ENCODE measurements at regions of chr7 and their contacts with region 1.

Region 1: GRCh38 chr7:97027427-97028234 is 3.0 kb upstream of the DLX5 start:
- DNase-seq: peak; percentile 34 to 69 (median 59)
- ATAC-seq: peak; percentile 89
- H3K4me3 ChIP-seq: peak overlapping the region; percentile 46
- H3K4me3 Mint-ChIP-seq: peak overlapping the region; percentile 71 to 92 (median 87)
- H3K27ac ChIP-seq: no peak overlapping the region
- H3K27ac Mint-ChIP-seq: peak overlapping the region in 1 of 9 donors; percentile 23
- H3K4me1 ChIP-seq: peaks cover 0 to 18% of the 10 kb centered on the region in 2 donors
- H3K4me1 Mint-ChIP-seq: peaks cover 19 to 51% (median 43%) of the 10 kb centered on the region in 7 donors
- H3K27me3 ChIP-seq: peaks cover 0 to 31% of the 10 kb centered on the region in 2 donors
- H3K27me3 Mint-ChIP-seq: peaks cover 62 to 81% (median 78%) of the 10 kb centered on the region in 5 donors

Region 2: DNA sequence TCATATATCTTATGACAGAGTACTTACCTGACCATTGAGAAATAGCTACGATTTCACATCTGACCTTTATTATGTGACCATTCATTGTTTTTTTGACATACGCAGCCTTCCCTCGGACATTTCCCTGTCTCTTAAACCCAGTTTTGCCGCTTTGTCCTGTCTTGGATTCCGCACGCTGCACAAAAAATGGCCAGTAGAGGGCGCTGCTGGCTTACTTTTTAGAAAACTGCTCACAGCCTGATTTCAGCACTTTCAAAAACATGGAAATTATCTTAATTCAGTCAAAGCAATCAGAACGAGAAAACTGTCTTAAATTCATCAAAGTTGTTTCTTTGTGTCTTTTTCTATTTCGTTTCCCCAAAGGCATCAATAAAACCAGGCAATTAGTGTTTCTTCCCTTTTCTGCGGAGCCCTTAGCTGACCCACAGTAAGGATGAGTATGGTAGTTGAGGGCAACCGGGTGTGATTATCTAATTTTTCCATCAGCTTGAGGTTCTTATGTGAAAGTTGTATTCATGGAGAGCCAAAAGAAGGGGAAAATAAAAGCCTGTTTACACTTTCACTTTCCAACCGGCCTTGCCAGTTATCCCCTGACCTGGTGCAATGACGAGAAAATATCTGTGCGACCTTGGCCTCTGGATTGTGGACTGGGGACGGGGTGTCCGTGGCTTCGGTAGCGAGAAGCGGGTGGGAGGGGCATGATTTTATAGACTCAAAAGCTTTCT is 1110.9 kb before region 1 on chr7:
- CTCF ChIA-PET with region 1: interaction called, 11 read pairs
- POLR2A ChIA-PET with region 1: no interaction called
- intact Hi-C with region 1: loop called in 1 of 2 experiments (anchors 1 kb)
- DNase-seq: peak; percentile 26 to 66 (median 49)
- ATAC-seq: peak; percentile 72
- H3K4me3 ChIP-seq: no peak overlapping the region
- H3K4me3 Mint-ChIP-seq: peak overlapping the region in 1 of 10 donors; percentile 51
- H3K27ac ChIP-seq: no peak overlapping the region
- H3K27ac Mint-ChIP-seq: no peak overlapping the region
- H3K4me1 ChIP-seq: no peaks in the 10 kb centered on the region
- H3K4me1 Mint-ChIP-seq: peaks cover 0 to 8% (median 0%) of the 10 kb centered on the region in 7 donors
- H3K27me3 ChIP-seq: no peaks in the 10 kb centered on the region
- H3K27me3 Mint-ChIP-seq: peaks cover 19 to 41% (median 34%) of the 10 kb centered on the region in 5 donors

Region 3: DNA sequence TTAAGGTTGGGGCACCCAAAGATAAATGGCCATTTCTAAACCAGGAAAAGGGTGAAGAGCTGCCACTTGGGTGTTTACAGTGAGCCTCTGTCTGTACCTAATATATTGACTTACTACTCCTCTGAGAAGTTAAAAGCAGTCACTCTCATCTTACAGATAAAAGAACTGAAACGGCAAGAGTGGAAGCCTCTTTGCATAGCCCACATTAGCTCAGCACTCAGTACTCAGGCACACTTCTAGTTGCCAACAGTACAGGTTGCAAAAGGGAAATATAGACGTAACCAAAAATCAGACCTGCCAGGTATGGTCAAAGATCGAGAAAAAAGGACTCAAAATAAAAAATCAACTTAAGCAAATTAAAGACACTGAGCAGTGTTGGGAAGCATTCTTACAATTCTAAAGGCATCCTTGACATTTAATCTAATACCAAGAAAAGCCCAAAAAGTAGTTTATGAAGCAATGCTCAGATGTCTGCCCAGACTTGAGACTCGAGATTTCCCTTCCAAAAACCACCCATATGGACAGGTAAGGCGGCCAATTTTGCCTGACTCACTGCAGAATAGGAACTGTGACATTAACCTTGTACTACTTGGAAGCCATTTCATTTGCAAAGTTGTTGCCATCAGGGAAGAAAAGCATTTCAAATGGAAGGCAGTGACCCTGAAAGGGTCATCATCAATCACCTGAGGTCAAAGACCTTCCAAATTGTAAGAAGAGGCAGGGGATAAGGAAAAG is 845.0 kb before region 1 on chr7:
- CTCF ChIA-PET with region 1: no interaction called
- POLR2A ChIA-PET with region 1: no interaction called
- intact Hi-C with region 1: loop called in 1 of 2 experiments (anchors 1 kb)
- DNase-seq: no peak
- ATAC-seq: no peak
- H3K4me3 ChIP-seq: no peak overlapping the region
- H3K4me3 Mint-ChIP-seq: no peak overlapping the region
- H3K27ac ChIP-seq: no peak overlapping the region
- H3K27ac Mint-ChIP-seq: peak overlapping the region in 1 of 9 donors; percentile 1
- H3K4me1 ChIP-seq: no peaks in the 10 kb centered on the region
- H3K4me1 Mint-ChIP-seq: peaks cover 0 to 2% (median under 1%) of the 10 kb centered on the region in 7 donors
- H3K27me3 ChIP-seq: no peaks in the 10 kb centered on the region
- H3K27me3 Mint-ChIP-seq: no peaks in the 10 kb centered on the region

Region 4: GRCh38 chr7:96596120-96596826 is 431.4 kb before region 1 on chr7:
- CTCF ChIA-PET with region 1: no interaction called
- POLR2A ChIA-PET with region 1: no interaction called
- intact Hi-C with region 1: loop called in 1 of 2 experiments (anchors 5 kb)
- DNase-seq: peak in 2 of 9 donors; percentile 0 to 3
- ATAC-seq: no peak
- H3K4me3 ChIP-seq: no peak overlapping the region
- H3K4me3 Mint-ChIP-seq: no peak overlapping the region
- H3K27ac ChIP-seq: no peak overlapping the region
- H3K27ac Mint-ChIP-seq: no peak overlapping the region
- H3K4me1 ChIP-seq: no peaks in the 10 kb centered on the region
- H3K4me1 Mint-ChIP-seq: no peaks in the 10 kb centered on the region
- H3K27me3 ChIP-seq: no peaks in the 10 kb centered on the region
- H3K27me3 Mint-ChIP-seq: peaks cover 24 to 35% (median 30%) of the 10 kb centered on the region in 5 donors

Region 5: GRCh38 chr7:96995406-96996104 is 32.1 kb before region 1 on chr7:
- CTCF ChIA-PET with region 1: no interaction called
- POLR2A ChIA-PET with region 1: no interaction called
- intact Hi-C with region 1: loop called in 1 of 2 experiments (anchors 2 kb)
- DNase-seq: no peak
- ATAC-seq: no peak
- H3K4me3 ChIP-seq: no peak overlapping the region
- H3K4me3 Mint-ChIP-seq: no peak overlapping the region
- H3K27ac ChIP-seq: no peak overlapping the region
- H3K27ac Mint-ChIP-seq: no peak overlapping the region
- H3K4me1 ChIP-seq: no peaks in the 10 kb centered on the region
- H3K4me1 Mint-ChIP-seq: peaks cover 0 to 19% (median 5%) of the 10 kb centered on the region in 7 donors
- H3K27me3 ChIP-seq: peaks cover 3 to 40% of the 10 kb centered on the region in 2 donors
- H3K27me3 Mint-ChIP-seq: peaks cover 94 to 95% (median 95%) of the 10 kb centered on the region in 5 donors

Region 6: DNA sequence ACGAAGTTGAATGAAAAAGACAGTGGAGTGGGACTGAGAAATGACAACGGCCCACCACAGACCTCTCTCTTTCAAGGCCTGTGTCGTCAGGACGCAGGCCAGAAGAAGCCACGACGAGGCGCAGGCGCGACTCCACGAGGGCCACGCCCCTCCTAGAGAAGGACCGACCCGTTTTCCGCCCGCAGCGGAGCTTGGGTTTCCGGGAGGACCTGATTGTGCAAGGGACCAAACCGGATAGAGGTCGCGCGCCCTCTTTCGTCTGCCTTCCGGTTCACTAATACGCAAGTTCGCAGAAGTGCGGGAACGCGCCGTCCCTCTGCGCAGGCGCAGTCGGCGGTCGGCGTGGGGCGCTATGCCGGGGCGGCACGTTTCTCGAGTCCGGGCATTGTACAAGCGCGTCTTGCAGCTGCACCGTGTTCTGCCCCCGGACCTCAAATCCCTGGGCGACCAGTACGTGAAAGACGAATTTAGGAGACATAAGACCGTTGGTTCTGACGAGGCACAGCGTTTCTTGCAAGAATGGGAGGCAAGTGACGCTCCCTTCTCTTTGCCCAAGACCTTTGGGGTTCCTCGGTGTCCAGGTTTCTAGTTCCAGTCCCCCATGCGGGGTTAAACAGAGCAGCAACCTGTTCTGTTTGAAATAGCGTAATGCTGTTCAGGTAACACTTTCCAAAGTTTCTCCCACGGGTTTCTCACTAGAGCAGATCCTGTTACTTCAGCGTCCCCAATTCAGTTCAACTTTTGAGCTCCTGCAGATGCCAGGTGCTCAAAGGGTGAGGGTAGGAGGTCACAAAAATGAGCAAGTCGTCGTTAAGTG is 89.9 kb after region 1 on chr7 and contains the start of gene SDHAF3:
- CTCF ChIA-PET with region 1: no interaction called
- POLR2A ChIA-PET with region 1: no interaction called
- intact Hi-C with region 1: loop called in 1 of 2 experiments (anchors 1 kb)
- DNase-seq: peak; percentile 97 to 98 (median 98)
- ATAC-seq: peak; percentile 98
- H3K4me3 ChIP-seq: peak within 1 kb of the TSS; percentile 90
- H3K4me3 Mint-ChIP-seq: peak within 1 kb of the TSS; percentile 87 to 98 (median 96)
- H3K27ac ChIP-seq: peak within 1 kb of the TSS; percentile 71
- H3K27ac Mint-ChIP-seq: peak within 1 kb of the TSS; percentile 87 to 97 (median 94)
- H3K4me1 ChIP-seq: peaks cover 7 to 15% of the 10 kb centered on the region in 2 donors
- H3K4me1 Mint-ChIP-seq: peaks cover 17 to 67% (median 57%) of the 10 kb centered on the region in 7 donors
- H3K27me3 ChIP-seq: no peaks in the 10 kb centered on the region
- H3K27me3 Mint-ChIP-seq: peaks cover 0 to 2% (median 0%) of the 10 kb centered on the region in 5 donors
- total RNA-seq, gene SDHAF3: 8.4 to 16.5 (median 14.3) TPM

Measured in naive thymus-derived CD4-positive, alpha-beta T cell (primary cell).